Activated CD4-positive, alpha-beta T cell treated with anti-CD3 and anti-CD28 coated beads, Interleukin-2, amount 10 ng/mL, durations not matched to agents 7 days and 5 days (primary cell): ENCODE measurements at regions of chr6 and their contacts with region 1.

Region 1: DNA sequence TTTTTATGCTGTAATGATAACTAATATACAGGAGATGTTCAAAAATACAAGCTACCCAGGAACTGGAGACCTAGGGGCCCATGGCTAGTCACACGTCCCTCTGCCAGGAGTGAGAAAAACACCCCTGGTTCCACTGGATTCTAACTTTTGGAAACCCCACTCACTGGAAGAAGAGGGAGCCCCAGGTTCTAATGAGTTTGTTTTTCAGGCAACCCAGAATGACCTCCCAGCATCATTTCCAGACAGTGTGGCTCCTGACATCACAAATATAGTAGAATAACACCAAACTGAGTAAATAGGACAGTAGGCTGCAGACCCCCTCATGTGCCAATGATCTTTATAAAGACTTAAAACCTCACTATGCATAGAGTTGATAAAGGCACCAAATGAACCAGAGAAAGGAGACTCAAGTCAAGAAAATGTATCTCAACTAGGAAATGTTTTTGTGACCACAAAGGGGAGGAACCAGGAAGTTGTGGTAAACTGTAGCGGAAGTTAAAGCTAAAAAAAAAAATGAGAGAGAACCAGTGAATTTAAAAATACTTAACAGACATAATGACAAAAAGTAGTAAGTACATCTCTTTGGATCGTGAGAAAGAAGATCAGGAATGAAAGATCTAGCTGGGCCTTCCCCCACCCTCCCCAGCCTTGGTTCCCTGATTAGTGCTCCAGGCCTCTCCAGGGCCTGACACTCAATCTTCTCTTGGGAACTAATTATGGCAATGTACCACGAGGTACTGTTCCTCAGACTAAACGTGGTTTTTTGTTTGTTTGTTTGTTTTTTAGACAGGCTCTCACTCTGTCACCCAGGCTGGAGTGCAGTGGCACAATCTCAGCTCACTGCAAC is 19.8 kb downstream of the HLA-E start:
- DNase-seq: peak; percentile 68
- H3K4me3 Mint-ChIP-seq: peak overlapping the region; percentile 71
- H3K27ac Mint-ChIP-seq: peak overlapping the region; percentile 90
- H3K4me1 Mint-ChIP-seq: peaks cover 51% of the 10 kb centered on the region
- H3K27me3 Mint-ChIP-seq: no peaks in the 10 kb centered on the region

Region 2: DNA sequence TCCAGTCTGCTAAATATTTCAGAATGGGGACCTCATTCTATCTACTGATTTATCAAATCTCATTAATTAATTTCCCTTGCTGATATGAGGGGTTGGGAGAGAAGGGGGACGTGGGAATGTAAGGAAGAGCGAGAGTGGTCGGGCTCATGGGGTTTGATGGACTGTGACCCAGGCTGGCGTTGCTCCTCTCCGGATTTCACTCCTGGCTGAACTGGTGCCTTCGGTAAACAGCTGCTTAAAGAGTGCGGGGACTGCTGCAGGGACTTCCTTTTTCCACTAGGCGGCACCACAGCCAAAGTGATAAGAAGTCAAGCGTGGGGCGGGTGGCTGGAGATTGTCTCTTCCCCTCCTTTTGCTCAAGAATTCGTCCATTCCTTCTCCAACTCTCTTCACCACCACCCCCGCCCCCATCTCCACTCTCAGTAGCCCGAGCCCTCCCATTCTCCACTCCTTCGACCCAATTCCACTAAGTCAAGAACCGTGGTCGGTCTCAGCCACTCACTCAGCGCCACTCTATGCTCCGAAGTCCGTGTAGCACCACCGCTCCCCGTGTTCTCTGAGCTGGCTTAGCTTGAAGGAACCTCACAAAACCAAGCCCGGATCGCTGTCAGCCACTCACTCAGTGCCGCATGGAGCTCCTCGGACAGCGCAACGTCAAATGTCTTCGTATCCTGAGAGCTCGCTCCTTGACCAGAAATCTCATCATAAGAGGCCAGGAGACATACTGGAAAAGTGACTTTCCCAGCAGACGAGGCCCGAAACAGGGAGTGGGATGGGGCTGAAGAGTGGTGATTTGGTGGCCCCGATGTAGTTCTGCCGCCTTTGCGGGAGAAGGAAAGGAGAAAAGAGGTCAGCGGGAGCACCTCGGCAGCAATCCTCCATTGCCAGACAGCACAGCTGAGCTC is 405.9 kb before region 1 on chr6:
- CTCF ChIA-PET with region 1: no interaction called
- POLR2A ChIA-PET with region 1: no interaction called
- DNase-seq: peak; percentile 87
- H3K4me3 Mint-ChIP-seq: peak overlapping the region; percentile 77
- H3K27ac Mint-ChIP-seq: peak overlapping the region; percentile 73
- H3K4me1 Mint-ChIP-seq: peaks cover 42% of the 10 kb centered on the region
- H3K27me3 Mint-ChIP-seq: peaks cover 66% of the 10 kb centered on the region

Region 3: DNA sequence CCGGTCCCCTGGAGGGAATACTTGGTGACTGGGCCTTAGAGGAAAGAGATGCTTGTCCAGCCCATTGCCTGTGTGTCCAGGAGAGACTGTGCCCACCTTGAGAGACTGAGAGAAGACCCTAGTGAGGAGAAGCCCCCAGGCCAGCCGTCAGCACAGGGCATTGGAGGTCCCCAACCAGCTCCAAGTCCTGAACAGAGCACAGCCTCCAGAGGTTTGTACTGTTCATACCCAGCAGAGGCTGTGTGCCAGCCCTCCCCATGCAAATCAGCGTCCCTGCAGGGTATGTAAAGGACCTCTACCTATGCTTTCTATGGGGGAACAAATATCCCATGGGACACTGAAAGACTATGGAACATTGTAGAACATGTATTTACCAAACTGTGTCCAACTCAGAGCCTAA is 11.4 kb before region 1 on chr6:
- CTCF ChIA-PET with region 1: interaction called, 14 read pairs
- POLR2A ChIA-PET with region 1: interaction called, 4 read pairs
- DNase-seq: no peak
- H3K4me3 Mint-ChIP-seq: no peak overlapping the region
- H3K27ac Mint-ChIP-seq: no peak overlapping the region
- H3K4me1 Mint-ChIP-seq: peaks cover 60% of the 10 kb centered on the region
- H3K27me3 Mint-ChIP-seq: no peaks in the 10 kb centered on the region

Region 4: DNA sequence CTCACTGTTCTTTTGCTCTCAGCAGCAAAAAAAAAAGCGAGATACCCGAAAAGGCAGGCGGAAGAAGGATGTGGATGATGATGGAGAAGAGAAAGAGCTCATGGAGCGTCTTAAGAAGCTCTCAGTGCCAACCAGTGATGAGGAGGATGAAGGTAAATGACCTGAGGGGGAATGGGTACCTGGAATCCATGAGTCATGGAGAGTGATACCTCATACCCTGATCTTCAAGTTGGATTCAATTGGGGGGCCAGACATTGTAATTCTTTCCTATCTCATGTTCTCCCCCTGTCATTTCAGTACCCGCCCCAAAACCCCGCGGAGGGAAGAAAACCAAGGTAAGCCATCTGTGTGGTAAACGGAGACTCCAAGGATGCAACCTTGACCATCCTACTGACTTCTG is 68.9 kb after region 1 on chr6:
- CTCF ChIA-PET with region 1: no interaction called
- POLR2A ChIA-PET with region 1: no interaction called
- DNase-seq: no peak
- H3K4me3 Mint-ChIP-seq: no peak overlapping the region
- H3K27ac Mint-ChIP-seq: peak overlapping the region; percentile 68
- H3K4me1 Mint-ChIP-seq: peaks cover 25% of the 10 kb centered on the region
- H3K27me3 Mint-ChIP-seq: no peaks in the 10 kb centered on the region